Activated CD4-positive, alpha-beta T cell treated with anti-CD3 and anti-CD28 coated beads, Interleukin-2, amount 10 ng/mL, durations not matched to agents 24 days and 14 days (primary cell): ENCODE measurements at regions of chr14 and their contacts with region 1.

Region 1: DNA sequence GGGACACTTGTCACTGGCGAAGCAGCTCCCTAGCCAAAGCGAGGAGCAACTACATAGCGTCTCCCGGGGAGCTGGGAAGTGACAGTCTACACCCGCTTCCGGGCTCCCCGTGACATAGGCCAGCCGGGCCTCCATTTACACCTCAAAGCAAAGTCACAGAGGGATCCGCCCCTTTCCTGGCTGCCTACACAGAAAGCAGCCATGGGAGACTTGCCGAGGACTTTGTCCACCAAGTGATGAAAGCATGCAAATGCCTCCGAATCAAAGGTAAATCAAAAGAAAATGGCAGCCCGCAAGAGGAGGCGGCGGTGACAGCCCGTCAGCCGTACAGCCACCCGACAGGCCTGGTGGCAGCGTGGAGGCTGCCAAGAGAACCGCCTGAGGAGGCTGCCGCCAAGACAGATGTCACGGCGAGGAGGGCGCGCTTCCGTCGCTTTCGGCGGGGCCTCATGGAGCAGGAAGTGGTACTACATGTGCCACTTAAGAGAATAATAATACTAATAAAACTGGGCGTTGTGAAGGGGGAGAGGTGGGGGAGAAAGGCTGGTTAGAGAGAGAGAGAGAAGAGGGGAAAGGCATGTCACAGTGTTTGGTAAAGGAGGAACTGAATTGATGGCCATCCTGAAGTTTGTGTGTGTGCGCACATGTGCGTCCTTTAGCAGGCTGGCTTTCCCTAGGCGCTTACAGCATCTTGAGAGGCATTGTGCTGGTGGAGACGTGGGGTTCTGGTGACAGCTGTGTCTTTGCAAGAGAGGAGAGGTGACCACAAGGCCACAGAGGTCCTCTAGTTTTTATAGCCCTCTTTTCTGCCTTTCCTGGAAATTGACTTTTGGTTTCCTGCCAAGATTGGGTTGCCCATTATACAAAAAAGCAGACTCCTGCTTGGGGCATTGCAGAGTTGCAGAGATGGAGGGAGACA is 661.7 kb downstream of the VRK1 start:
- DNase-seq: peak; percentile 94
- H3K4me3 Mint-ChIP-seq: peak overlapping the region; percentile 94
- H3K27ac Mint-ChIP-seq: peak overlapping the region; percentile 99
- H3K4me1 Mint-ChIP-seq: peaks cover 56% of the 10 kb centered on the region
- H3K27me3 Mint-ChIP-seq: no peaks in the 10 kb centered on the region

Region 2: GRCh38 chr14:96554315-96554910 is 904.5 kb before region 1 on chr14:
- intact Hi-C with region 1: no loop called
- DNase-seq: no peak
- H3K4me3 Mint-ChIP-seq: no peak overlapping the region
- H3K27ac Mint-ChIP-seq: peak overlapping the region; percentile 70
- H3K4me1 Mint-ChIP-seq: peaks cover 7% of the 10 kb centered on the region
- H3K27me3 Mint-ChIP-seq: no peaks in the 10 kb centered on the region

Region 3: DNA sequence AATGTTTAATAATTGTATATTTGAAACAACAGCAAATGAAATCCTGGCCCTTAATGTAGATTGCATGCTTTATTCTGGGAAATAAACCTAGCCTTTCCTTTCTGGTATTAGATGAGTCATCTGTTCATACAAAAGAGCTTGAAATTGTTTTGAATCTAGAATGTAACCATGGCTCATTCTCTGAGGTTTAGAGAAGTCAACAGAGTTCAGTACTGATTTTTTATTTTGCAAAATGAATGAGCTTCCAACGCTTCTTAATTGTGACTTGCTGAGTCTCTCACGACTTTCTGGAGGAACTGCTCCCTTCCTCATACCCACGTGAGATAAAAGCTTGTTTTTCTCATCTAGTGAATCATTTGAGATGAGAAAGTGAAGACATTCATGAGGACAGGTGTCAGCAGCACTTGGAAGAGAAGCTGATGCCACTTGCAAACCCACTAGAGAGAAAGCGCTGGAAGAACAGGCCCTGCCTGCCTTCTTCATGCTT is 152.1 kb before region 1 on chr14:
- intact Hi-C with region 1: loop called (anchors 5 kb)
- DNase-seq: peak; percentile 65
- H3K4me3 Mint-ChIP-seq: peak overlapping the region; percentile 20
- H3K27ac Mint-ChIP-seq: peak overlapping the region; percentile 86
- H3K4me1 Mint-ChIP-seq: peaks cover 28% of the 10 kb centered on the region
- H3K27me3 Mint-ChIP-seq: no peaks in the 10 kb centered on the region

Region 4: DNA sequence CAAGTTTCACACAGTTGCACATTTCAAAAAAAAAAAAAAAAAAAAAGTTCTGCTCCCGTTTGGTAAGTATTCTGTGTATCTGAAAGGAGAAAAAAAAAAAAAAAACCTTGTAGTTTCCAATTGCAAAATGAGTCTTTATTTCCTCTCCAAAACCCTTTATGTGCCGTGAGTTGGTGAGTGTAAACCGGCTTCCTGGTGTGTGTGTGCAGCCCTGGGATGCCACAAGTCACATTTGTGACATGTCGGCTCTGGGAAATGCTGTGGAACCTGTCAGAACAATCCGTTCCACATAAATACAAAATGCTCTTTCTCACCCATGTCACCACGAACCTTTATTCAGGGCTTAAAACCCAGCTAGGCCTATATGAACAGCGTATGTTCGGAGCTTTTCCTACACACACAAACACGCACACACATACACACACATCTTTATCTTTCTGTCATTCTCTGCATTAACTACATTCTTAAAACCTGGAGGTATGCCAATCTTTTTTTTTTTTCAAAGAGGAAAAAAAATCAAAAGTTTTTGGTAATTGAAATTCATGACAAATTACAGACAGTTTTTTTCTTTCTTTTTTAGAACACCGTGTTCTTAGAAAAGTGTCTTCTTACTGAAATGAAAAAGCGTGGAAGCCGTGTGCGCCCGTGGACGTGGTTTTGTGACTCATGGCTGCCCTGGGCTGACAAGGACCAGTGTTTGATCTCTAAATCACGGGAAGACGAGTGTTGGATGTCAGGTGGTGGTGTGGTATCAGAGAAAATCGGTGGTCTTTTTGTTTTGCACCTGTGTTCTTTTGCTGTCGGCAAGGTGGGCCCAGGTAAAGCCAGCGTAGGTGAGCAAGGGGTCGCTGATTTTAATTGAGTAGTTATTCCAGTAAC is 49.7 kb before region 1 on chr14:
- intact Hi-C with region 1: loop called (anchors 1 kb)
- DNase-seq: peak; percentile 82
- H3K4me3 Mint-ChIP-seq: peak overlapping the region; percentile 64
- H3K27ac Mint-ChIP-seq: peak overlapping the region; percentile 86
- H3K4me1 Mint-ChIP-seq: peaks cover 31% of the 10 kb centered on the region
- H3K27me3 Mint-ChIP-seq: peaks cover 5% of the 10 kb centered on the region

Region 5: GRCh38 chr14:97602438-97603117 is 143.7 kb after region 1 on chr14:
- intact Hi-C with region 1: loop called (anchors 5 kb)
- DNase-seq: peak; percentile 90
- H3K4me3 Mint-ChIP-seq: no peak overlapping the region
- H3K27ac Mint-ChIP-seq: no peak overlapping the region
- H3K4me1 Mint-ChIP-seq: peaks cover 31% of the 10 kb centered on the region
- H3K27me3 Mint-ChIP-seq: no peaks in the 10 kb centered on the region

Region 6: GRCh38 chr14:97707603-97708002 is 248.7 kb after region 1 on chr14:
- intact Hi-C with region 1: loop called (anchors 2 kb)
- DNase-seq: peak; percentile 75
- H3K4me3 Mint-ChIP-seq: no peak overlapping the region
- H3K27ac Mint-ChIP-seq: peak overlapping the region; percentile 28
- H3K4me1 Mint-ChIP-seq: peaks cover 72% of the 10 kb centered on the region
- H3K27me3 Mint-ChIP-seq: no peaks in the 10 kb centered on the region

Region 7: GRCh38 chr14:98182393-98183055 is 723.6 kb after region 1 on chr14:
- intact Hi-C with region 1: loop called (anchors 5 kb)
- DNase-seq: peak; percentile 73
- H3K4me3 Mint-ChIP-seq: peak overlapping the region; percentile 72
- H3K27ac Mint-ChIP-seq: peak overlapping the region; percentile 98
- H3K4me1 Mint-ChIP-seq: peaks cover 82% of the 10 kb centered on the region
- H3K27me3 Mint-ChIP-seq: no peaks in the 10 kb centered on the region

Region 8: DNA sequence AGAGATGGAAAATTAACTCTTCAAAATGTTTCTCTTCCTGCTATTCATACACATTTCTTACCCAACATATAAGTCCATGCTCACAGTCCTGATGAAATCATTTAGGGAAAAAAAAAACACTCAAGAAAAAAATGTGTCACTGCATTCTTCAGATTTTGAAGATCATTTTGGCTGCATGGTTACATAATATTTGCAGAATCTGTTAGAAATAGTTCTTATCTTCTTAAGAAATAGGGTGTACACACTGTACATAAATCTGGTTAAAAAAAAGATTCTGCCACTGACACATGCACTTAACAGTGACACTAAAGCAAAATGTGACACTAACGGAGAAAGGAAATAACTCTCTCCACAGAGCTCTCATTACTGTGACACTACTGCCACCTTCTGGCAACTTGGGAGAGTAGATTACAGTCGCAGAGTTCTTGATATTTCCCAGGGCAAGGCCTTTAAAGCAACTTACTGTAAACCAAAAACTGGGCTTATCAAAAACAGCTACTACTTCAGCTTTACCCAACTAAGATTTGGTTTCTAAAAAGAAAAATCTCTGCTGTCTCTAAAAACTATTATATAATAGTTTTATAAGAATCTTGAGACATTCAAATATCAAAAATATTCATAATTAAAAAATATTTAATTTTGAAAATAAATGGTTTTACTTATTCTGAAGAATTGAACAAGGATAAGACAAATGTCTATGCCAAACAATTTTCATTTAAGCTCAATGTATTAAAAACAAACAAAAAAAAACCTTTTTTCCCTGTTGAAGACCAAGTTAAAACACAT is 1956.8 kb after region 1 on chr14:
- intact Hi-C with region 1: loop called (anchors 5 kb)
- DNase-seq: peak; percentile 91
- H3K4me3 Mint-ChIP-seq: no peak overlapping the region
- H3K27ac Mint-ChIP-seq: peak overlapping the region; percentile 13
- H3K4me1 Mint-ChIP-seq: peaks cover 20% of the 10 kb centered on the region
- H3K27me3 Mint-ChIP-seq: no peaks in the 10 kb centered on the region